Vagina (tissue), 2 donors: ENCODE measurements at regions of chr11 and their contacts with region 1.

Region 1: GRCh38 chr11:130817330-130817944 is 98.8 kb downstream of the SNX19 start:
- DNase-seq: no peak
- H3K4me3 ChIP-seq: no peak overlapping the region
- H3K27ac ChIP-seq: no peak overlapping the region
- H3K4me1 ChIP-seq: no peaks in the 10 kb centered on the region
- H3K27me3 ChIP-seq: no peaks in the 10 kb centered on the region
- CTCF ChIP-seq: no peak
- POLR2A ChIP-seq: no peak

Region 2: DNA sequence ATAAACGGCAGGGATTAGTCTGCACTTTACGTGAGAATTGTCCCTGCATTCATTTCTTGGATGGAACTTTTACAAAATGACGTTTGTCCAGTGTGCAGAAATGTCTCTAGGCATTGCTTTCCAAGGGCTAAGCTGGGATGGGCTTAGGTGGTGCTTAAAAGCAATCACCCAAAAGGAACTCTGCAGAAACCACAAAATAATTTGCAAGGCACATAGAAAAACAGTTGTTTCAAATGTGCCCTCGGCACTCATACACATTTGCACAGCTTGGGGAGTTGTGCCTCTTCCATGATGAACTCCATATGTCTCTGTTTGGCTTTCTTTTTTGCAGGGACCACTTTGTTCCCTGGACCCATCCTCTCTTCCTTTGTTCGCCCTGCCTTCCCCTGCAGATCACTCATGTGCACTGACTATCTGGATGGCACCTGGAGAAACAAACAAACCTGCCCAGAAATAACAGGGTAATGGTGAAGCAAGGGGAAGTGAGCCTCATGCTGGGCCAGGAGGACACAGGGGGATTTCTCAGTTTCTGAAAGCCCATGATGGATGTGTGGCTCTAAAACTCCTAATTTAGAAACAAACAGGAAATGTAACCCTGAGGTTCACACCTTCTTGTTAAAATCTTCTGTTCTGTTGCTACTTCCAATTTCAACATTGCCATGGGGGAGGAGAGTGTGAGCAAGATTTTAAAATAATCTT is 51.3 kb before region 1 on chr11:
- intact Hi-C with region 1: no loop called
- DNase-seq: no peak
- H3K4me3 ChIP-seq: no peak overlapping the region
- H3K27ac ChIP-seq: no peak overlapping the region
- H3K4me1 ChIP-seq: no peaks in the 10 kb centered on the region
- H3K27me3 ChIP-seq: no peaks in the 10 kb centered on the region
- CTCF ChIP-seq: no peak
- POLR2A ChIP-seq: no peak

Region 3: DNA sequence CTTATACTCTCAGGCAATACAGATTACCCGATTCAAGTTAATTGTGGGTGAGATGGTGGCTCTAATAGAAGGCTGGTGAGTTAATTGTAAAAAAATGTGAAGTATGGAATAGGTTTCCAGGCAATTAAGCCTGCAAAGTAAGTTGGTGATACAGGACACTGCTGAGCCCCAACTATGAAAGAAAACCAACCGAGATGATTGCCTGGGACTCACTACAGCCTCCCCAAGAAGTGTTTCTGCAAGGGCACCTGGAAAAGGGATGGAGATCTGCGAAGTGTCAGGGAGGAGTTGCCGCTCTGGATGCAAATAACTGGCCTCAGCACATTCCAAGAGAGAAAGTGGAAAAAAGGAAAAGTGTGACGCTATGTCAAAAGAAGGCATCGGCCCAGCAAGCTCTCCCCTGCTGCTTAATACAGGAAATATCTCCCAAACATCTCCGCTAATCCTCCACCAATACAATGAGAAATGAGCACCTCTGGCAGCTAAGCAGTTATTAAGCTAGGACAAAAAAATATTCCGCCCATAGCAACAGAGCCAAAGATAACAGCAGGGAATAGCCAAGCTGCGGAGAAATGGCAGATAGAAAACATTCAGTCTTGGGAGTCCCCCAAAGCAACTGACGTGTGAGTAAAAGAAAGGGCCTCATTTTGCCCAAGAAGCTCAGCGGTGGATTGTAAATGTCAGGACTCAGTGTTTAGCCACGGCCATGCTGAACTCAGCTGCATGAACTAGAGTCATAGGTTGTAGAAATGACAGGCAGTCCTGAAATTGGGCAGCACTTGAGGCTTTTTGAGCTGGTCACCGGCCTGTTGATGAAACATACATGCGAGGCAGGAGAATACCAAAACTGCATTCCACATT is 34.8 kb before region 1 on chr11:
- intact Hi-C with region 1: no loop called
- DNase-seq: peak in 1 of 2 donors; percentile 87
- H3K4me3 ChIP-seq: no peak overlapping the region
- H3K27ac ChIP-seq: no peak overlapping the region
- H3K4me1 ChIP-seq: peaks cover 6% of the 10 kb centered on the region
- H3K27me3 ChIP-seq: no peaks in the 10 kb centered on the region
- CTCF ChIP-seq: no peak
- POLR2A ChIP-seq: no peak

Region 4: DNA sequence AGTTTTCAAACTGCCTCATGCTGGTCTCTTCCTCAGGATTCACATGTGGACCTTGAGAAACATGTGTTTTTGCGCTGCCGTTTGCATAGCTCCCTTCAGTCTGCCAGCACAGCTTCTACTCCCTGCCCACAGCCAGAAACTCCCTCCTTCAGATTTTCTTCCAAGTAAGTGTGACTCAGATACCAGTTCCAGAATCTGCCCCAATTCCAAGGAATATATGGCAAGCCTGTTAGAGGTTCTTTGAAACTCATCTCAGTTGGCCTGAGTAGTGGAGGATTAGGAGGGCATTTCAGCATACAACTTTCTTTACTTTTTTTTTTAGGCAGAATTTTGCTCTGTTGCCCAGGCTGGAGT is 31.8 kb after region 1 on chr11:
- intact Hi-C with region 1: loop called (anchors 2 kb)
- DNase-seq: no peak
- H3K4me3 ChIP-seq: no peak overlapping the region
- H3K27ac ChIP-seq: no peak overlapping the region
- H3K4me1 ChIP-seq: no peaks in the 10 kb centered on the region
- H3K27me3 ChIP-seq: no peaks in the 10 kb centered on the region
- CTCF ChIP-seq: no peak
- POLR2A ChIP-seq: no peak

Region 5: DNA sequence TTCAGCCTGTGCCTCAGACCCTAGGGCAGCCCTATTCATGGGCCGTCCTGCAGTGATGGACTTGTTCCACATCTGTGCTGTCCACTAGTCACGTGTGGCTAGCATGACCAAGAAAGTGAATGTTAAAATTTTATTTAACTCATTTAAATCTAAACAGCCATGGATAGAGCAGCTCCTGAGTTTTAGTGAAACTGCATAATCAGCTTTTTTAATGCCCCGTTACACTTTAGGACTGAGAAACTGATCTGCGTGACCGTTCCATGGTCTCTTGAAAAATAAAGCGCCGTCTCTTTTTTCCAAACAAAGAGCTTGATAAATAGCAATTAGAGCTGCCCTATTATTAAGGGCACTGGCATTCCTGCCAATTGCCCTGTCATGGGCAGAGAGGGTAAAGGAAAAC is 175.4 kb after region 1 on chr11:
- intact Hi-C with region 1: no loop called
- DNase-seq: no peak
- H3K4me3 ChIP-seq: no peak overlapping the region
- H3K27ac ChIP-seq: no peak overlapping the region
- H3K4me1 ChIP-seq: no peaks in the 10 kb centered on the region
- H3K27me3 ChIP-seq: no peaks in the 10 kb centered on the region
- CTCF ChIP-seq: no peak
- POLR2A ChIP-seq: no peak

Region 6: DNA sequence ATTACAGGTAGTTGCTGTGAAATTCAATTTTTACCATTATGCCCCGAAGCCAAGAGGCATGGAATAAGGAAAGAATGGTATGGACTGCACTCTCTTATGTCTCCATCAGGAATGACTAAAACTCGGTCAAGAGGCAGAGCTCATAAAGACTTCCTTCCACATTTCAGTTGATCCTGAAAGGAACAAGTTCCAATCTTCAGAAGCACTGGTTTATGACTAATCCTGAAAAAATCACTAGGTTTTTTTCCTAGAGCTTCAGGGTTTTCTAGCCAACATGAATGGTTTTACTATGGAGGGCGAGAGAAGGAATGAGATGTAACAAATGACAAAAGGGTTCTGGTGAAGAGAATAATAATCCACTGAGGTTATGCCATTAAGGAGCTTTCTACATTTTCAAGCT is 1385.2 kb after region 1 on chr11:
- intact Hi-C with region 1: no loop called
- DNase-seq: no peak
- H3K4me3 ChIP-seq: no peak overlapping the region
- H3K27ac ChIP-seq: no peak overlapping the region
- H3K4me1 ChIP-seq: no peaks in the 10 kb centered on the region
- H3K27me3 ChIP-seq: no peaks in the 10 kb centered on the region
- CTCF ChIP-seq: no peak
- POLR2A ChIP-seq: no peak